ENCODE measurements at regions of chr2 and their contacts with region 1.

Region 1: DNA sequence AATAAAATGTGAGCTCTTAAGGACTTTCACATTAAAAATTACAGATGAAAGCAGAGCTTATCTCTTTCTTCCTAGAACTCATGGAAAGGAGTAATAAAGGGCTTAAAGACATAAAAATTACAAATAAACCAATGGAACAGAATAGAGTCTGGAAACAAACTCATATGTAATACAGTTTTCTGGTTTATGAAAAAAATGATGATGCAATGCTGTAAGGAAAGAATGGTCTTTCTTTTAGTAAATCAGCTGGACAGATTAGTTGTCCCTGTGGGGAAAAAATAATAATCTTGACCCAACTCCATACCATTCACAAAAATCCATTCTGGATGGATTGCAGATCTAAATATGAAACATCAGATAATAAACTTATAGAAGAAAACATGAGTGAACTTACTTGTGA is 54.2 kb downstream of the TMEM185B start:
- DNase-seq: no peak
- H3K4me3 ChIP-seq: no peak overlapping the region
- CTCF ChIP-seq: no peak

Region 2: GRCh38 chr2:120109186-120110061 is 59.6 kb before region 1 on chr2:
- CTCF ChIA-PET with region 1: interaction called, 114 read pairs
- POLR2A ChIA-PET with region 1: no interaction called
- DNase-seq: no peak
- H3K4me3 ChIP-seq: no peak overlapping the region
- CTCF ChIP-seq: peak; percentile 24

Region 3: GRCh38 chr2:120155308-120155707 is 13.7 kb before region 1 on chr2:
- CTCF ChIA-PET with region 1: no interaction called
- POLR2A ChIA-PET with region 1: no interaction called
- DNase-seq: no peak
- H3K4me3 ChIP-seq: no peak overlapping the region
- CTCF ChIP-seq: no peak

Region 4: DNA sequence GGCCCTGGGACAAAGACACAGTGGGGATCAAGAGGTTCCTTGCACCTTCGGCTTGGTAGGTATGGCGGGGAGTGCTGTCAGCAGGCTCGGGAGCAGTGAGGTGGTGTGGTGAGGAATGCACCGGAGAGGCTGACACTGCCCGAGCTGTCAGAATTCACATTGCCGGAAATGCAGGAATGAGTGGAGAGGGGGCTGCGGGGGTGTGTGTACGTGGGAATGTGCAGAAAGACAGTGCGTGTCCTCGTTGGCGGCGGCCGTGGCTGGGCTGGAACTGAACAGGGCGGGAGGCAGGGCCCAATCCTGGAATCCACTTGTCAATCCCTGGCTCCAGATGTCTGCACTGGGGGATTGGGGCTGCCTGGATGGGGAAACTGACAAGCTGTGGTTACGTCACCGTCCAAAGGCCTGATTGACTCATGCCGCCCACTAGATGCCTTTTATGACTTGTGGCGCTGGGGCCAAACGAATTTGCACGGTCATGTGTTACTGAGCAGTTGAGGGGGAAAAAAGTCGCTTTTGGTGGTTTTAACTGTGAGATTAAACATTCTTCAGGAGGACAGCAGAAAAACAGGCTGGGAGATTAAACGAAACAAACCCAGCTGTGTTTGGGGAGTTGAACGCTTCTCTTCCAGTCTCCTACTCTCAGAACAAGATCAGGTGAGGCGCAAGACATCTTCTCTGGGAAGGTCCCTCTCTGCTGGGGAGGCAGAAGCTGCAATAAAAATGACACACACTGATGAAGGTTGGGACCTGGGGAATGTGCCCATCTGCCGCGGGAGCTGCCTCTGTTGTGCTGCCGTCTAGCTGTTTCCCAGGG is 377.2 kb after region 1 on chr2:
- CTCF ChIA-PET with region 1: no interaction called
- POLR2A ChIA-PET with region 1: no interaction called
- DNase-seq: peak; percentile 98
- H3K4me3 ChIP-seq: 0 out of 2 replicates have a peak overlapping the region, but pooled peaks have one; percentile 15
- CTCF ChIP-seq: peak; percentile 8

Measured in AG04449 (cell line).